ENCODE measurements at regions of chr10 and their contacts with region 1.

Region 1: DNA sequence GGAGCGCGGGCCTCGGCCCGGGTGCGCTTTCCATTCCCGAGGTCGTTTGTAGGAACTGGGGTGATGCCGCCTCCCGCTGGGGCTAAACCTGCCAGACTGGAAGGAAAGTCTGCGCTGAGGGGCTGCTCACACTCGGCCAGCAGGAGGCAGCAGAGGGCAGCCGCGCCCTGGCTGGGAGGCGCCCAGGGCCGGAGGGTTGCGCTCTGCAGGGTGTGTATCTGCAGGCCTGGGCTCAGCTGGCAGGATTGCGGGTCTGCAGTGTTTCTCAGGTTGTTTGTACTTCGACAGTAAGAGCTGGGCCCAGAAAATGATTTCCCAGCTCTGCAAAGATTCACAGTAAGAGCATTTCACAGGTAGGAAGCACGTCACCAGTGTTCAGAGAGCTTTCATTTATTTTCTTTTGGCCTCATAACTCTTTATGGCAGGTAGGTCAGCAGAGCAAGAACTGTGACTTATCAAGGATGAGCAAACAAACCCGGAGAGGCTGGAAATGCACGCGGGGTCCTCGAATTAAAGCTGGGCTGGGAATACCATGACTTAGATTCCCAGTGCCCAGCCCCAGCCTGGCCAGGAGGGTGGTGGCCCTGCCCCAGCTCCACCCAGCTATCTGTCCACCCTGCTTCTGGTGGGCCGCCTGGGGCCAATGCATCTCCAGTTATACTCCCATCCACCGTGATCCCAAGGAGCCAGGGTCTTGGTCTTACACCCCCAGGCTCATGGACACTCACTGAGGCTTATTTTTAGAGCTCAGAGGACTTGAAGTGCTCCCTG is 15.2 kb upstream of the PPP2R2D start:
- DNase-seq: peak; percentile 81
- H3K4me3 ChIP-seq: no peak overlapping the region
- H3K27ac ChIP-seq: no peak overlapping the region
- H3K4me1 ChIP-seq: peaks cover 3% of the 10 kb centered on the region
- H3K27me3 ChIP-seq: no peaks in the 10 kb centered on the region
- CTCF ChIP-seq: peak; percentile 91

Region 2: DNA sequence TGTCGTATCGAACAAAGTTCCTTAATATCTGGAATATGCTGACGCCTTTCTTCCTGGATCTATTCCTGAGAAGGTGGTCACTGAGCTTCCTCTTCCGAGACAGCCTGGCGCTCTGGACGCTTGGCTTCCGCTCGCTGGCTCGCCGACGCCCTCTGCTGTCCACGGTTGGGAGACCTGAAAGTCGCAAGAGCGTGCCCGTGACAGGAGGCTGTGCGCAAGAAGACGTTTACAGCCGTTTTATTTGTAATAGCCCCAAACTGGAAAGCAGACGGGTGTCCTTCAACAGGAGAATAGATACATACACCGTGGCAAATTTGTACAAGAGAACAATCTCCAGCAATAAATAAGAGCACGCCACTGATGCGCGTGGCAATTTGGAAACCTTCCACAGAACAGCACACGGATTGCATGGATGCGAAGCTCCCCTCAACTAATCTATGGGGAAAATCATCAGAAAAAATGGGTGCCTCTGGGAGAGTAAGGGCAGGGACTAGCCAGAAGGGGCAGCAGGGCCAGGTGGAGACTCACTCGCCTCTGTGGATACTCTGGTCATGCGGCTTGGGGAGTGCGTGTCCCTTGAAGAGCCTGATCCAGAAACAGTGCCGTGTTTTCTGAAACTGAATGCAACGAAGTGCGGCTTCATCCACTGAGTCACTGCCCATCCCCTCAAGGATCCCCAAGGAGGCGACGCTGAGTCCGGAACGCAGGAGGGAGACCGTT is 137.7 kb after region 1 on chr10:
- intact Hi-C with region 1: loop called (anchors 2 kb)
- DNase-seq: peak; percentile 84
- H3K4me3 ChIP-seq: no peak overlapping the region
- H3K27ac ChIP-seq: no peak overlapping the region
- H3K4me1 ChIP-seq: no peaks in the 10 kb centered on the region
- H3K27me3 ChIP-seq: no peaks in the 10 kb centered on the region
- CTCF ChIP-seq: peak; percentile 90

Region 3: GRCh38 chr10:132142411-132143161 is 257.0 kb after region 1 on chr10:
- intact Hi-C with region 1: loop called (anchors 5 kb)
- DNase-seq: no peak
- H3K4me3 ChIP-seq: no peak overlapping the region
- H3K27ac ChIP-seq: no peak overlapping the region
- H3K4me1 ChIP-seq: no peaks in the 10 kb centered on the region
- H3K27me3 ChIP-seq: peaks cover 4% of the 10 kb centered on the region
- CTCF ChIP-seq: peak; percentile 87